ENCODE measurements at regions of chr2 and their contacts with region 1.

Region 1: DNA sequence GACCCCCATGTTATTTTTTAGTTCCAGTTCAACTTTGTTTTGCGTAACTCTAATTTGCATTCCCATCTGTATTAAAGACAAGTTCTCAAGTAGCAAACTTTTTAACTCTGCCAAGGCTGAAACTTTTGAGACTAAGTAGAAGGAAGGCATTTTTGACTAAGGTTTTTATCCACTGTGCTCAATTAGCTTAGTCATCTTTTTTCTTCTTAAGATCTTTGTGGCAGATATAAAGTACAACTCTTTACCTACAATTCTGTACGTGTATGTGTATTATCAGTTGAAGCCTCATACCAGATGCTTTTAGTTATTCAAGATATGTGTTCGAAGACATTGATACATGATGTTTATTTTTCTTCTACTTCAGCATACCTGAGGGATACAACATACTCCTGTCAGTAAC is 41.6 kb downstream of the CREB1 start:
- DNase-seq: no peak
- ATAC-seq: no peak
- H3K4me3 ChIP-seq: no peak overlapping the region
- H3K4me3 Mint-ChIP-seq: no peak overlapping the region
- H3K27ac ChIP-seq: no peak overlapping the region
- H3K27ac Mint-ChIP-seq: peak overlapping the region in 1 of 2 donors; percentile 5
- H3K4me1 ChIP-seq: no peaks in the 10 kb centered on the region
- H3K4me1 Mint-ChIP-seq: peaks cover 13 to 24% (median 17%) of the 10 kb centered on the region in 3 donors
- H3K27me3 ChIP-seq: no peaks in the 10 kb centered on the region
- H3K27me3 Mint-ChIP-seq: no peaks in the 10 kb centered on the region

Region 2: GRCh38 chr2:206471524-206472062 is 1099.8 kb before region 1 on chr2:
- CTCF ChIA-PET with region 1: no interaction called
- POLR2A ChIA-PET with region 1: interaction called in 1 of 2 experiments, 10 read pairs
- DNase-seq: no peak
- ATAC-seq: no peak
- H3K4me3 ChIP-seq: no peak overlapping the region
- H3K4me3 Mint-ChIP-seq: no peak overlapping the region
- H3K27ac ChIP-seq: no peak overlapping the region
- H3K27ac Mint-ChIP-seq: no peak overlapping the region
- H3K4me1 ChIP-seq: no peaks in the 10 kb centered on the region
- H3K4me1 Mint-ChIP-seq: no peaks in the 10 kb centered on the region
- H3K27me3 ChIP-seq: no peaks in the 10 kb centered on the region
- H3K27me3 Mint-ChIP-seq: peaks cover 7 to 13% of the 10 kb centered on the region in 2 donors

Region 3: GRCh38 chr2:207674826-207675225 is 103.5 kb after region 1 on chr2:
- CTCF ChIA-PET with region 1: interaction called in 1 of 2 experiments, 11 read pairs
- POLR2A ChIA-PET with region 1: no interaction called
- DNase-seq: no peak
- ATAC-seq: no peak
- H3K4me3 ChIP-seq: no peak overlapping the region
- H3K4me3 Mint-ChIP-seq: no peak overlapping the region
- H3K27ac ChIP-seq: no peak overlapping the region
- H3K27ac Mint-ChIP-seq: no peak overlapping the region
- H3K4me1 ChIP-seq: no peaks in the 10 kb centered on the region
- H3K4me1 Mint-ChIP-seq: no peaks in the 10 kb centered on the region
- H3K27me3 ChIP-seq: peaks cover 0 to 6% of the 10 kb centered on the region in 2 experiments
- H3K27me3 Mint-ChIP-seq: peaks cover 12 to 14% of the 10 kb centered on the region in 2 donors